Activated CD4-positive, alpha-beta T cell treated with anti-CD3 and anti-CD28 coated beads for 36 hours (primary cell): ENCODE measurements at regions of chr1 and their contacts with region 1.

Region 1: DNA sequence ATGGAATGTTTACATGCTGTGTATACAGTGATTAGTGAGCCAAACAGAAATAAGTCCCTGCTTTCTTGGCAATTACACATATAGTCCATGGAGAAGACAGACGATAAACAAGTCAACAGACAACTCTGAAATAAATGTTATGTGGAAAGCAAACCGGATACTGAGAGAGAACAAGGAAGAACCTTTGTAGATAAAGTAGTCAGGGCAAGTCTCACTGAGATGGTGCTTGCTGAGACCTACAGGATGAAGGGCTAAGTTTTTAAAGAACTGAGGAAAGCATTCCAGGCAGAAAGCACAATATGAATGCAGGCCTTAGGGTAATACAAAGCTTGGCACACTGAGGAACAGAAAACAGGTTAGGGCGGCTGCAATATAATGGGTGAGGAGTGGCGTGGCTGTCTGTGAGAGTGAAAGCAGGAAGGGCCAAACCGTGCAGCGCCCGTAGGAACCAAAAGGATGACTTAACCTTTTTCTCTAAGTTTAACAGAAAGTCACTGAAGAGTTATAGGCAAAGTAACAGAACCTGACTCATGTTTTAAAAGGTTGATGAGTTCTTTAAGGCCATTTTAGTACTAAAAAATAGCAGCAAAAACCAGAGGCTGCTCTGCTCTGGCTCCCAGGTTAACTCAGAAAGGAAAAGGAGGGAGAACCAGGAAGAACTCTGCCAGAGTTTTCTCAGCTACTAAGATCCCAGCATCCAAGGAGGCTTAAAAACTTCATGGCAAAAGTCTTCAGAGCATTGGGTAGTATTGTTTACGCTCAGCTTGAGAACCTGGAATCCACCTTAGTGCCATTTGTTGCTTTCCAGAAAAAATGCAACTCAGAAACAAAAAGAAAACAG is 8.7 kb upstream of the TTF2 start:
- DNase-seq: peak; percentile 57
- ATAC-seq: peak; percentile 57
- H3K4me3 Mint-ChIP-seq: peak overlapping the region; percentile 14
- H3K27ac Mint-ChIP-seq: peak overlapping the region; percentile 65
- H3K4me1 Mint-ChIP-seq: peaks cover 54% of the 10 kb centered on the region
- H3K27me3 Mint-ChIP-seq: no peaks in the 10 kb centered on the region

Region 2: DNA sequence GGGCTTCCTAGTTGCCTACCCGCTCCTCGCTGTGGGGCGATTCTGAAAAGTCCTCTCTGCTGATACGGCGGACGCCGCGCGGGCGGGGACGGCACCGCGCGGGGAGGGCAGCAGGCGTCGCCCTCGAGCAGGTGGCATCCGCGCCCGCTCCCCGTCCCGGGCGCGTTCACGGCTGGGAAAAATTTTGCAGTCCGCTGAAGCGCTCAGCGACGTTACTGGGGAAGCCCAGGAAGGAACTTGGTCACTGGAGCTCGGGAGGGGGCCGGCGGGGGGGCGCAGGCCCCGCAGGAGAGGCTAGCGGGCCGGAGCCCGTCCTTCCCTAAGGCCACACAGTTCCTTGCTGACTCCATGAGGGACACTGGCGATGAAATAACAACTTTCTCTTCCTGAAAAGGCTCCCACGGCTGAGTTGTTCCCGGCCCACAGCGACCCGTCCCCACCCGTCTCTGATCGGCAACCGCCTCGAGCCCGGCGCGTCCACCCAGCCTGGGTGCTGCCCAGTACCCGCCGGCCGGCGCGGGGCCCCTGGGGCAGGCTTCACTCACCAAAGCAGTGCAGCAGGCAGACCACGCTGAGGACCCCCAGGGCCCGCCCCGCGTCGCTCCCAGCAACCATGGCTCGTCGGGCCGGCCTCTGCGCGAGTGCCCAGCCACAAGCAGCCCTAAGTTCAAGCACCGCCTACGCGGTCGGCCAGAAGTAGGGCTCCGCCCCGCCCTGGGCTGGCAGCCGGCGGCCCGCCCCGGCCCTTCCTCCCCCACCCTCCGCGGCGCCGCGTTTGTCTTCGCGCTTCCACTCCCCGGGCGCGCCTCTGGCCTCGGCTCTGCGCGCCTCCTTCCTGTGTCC is 480.9 kb before region 1 on chr1 and contains the start of gene CD58:
- CTCF ChIA-PET with region 1: interaction called, 5 read pairs
- POLR2A ChIA-PET with region 1: no interaction called
- intact Hi-C with region 1: loop called (anchors 1 to 2 kb)
- DNase-seq: peak; percentile 93
- ATAC-seq: peak; percentile 77
- H3K4me3 Mint-ChIP-seq: peak within 1 kb of the TSS; percentile 91
- H3K27ac Mint-ChIP-seq: peak within 1 kb of the TSS; percentile 87
- H3K4me1 Mint-ChIP-seq: peaks cover 64% of the 10 kb centered on the region
- H3K27me3 Mint-ChIP-seq: peaks cover 8% of the 10 kb centered on the region
- total RNA-seq, gene CD58: 12.4 to 16.0 TPM

Region 3: GRCh38 chr1:116909510-116910378 is 141.7 kb before region 1 on chr1 and contains the start of gene PTGFRN:
- CTCF ChIA-PET with region 1: interaction called, 3 read pairs
- POLR2A ChIA-PET with region 1: no interaction called
- intact Hi-C with region 1: loop called in 1 of 2 experiments (anchors 2 kb)
- DNase-seq: peak; percentile 52
- ATAC-seq: peak; percentile 62
- H3K4me3 Mint-ChIP-seq: peak within 1 kb of the TSS; percentile 71
- H3K27ac Mint-ChIP-seq: peak within 1 kb of the TSS; percentile 59
- H3K4me1 Mint-ChIP-seq: peaks cover 3% of the 10 kb centered on the region
- H3K27me3 Mint-ChIP-seq: no peaks in the 10 kb centered on the region
- total RNA-seq, gene PTGFRN: 11.6 to 11.8 TPM

Region 4: GRCh38 chr1:117009132-117009531 is 42.3 kb before region 1 on chr1:
- CTCF ChIA-PET with region 1: interaction called, 3 read pairs
- POLR2A ChIA-PET with region 1: interaction called, 6 read pairs
- intact Hi-C with region 1: loop called in 1 of 2 experiments (anchors 2 kb)
- DNase-seq: peak; percentile 25
- ATAC-seq: peak; percentile 53
- H3K4me3 Mint-ChIP-seq: no peak overlapping the region
- H3K27ac Mint-ChIP-seq: peak overlapping the region; percentile 14
- H3K4me1 Mint-ChIP-seq: peaks cover 54% of the 10 kb centered on the region
- H3K27me3 Mint-ChIP-seq: peaks cover 3% of the 10 kb centered on the region

Region 5: GRCh38 chr1:117321680-117322609 is 270.5 kb after region 1 on chr1:
- CTCF ChIA-PET with region 1: no interaction called
- POLR2A ChIA-PET with region 1: no interaction called
- intact Hi-C with region 1: no loop called
- DNase-seq: no peak
- ATAC-seq: no peak
- H3K4me3 Mint-ChIP-seq: no peak overlapping the region
- H3K27ac Mint-ChIP-seq: no peak overlapping the region
- H3K4me1 Mint-ChIP-seq: no peaks in the 10 kb centered on the region
- H3K27me3 Mint-ChIP-seq: peaks cover 15% of the 10 kb centered on the region

Region 6: DNA sequence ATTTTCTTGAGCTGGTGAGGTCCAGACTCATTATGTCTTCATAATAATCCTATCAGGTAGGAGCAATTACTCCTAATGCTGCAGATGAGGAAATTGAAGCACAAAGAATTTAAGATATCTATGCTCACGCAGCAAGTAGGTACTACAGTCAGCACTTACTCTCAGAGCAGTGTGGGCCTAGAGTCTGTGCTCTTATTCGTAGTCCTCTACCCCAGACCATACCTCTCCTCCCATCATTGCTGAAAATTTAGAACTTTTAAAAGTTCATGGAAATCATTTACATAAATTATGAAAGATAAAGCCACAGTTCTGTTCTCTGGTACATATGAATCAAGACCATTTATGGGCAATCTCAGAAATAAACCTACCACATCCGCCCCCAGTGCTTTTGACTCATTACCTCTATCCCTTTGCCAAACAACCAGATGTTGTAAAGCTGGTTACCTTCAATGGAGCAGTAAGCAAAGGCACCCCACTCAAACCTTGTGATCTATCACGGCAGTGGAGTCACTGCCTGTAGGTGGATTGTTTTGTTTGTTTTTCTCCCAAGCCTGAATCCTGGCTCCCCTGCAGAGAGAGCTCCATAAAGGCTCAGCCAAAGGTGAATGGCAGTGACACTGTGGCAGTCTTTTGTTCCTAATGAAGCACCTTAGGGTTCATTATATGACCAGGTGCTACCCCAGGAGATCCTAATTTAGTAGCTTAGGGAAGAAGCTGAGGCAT is 294.9 kb after region 1 on chr1:
- CTCF ChIA-PET with region 1: no interaction called
- POLR2A ChIA-PET with region 1: no interaction called
- intact Hi-C with region 1: no loop called
- DNase-seq: peak; percentile 53
- ATAC-seq: peak; percentile 88
- H3K4me3 Mint-ChIP-seq: no peak overlapping the region
- H3K27ac Mint-ChIP-seq: no peak overlapping the region
- H3K4me1 Mint-ChIP-seq: peaks cover 15% of the 10 kb centered on the region
- H3K27me3 Mint-ChIP-seq: peaks cover 1% of the 10 kb centered on the region